ENCODE measurements at regions of chr10 and their contacts with region 1.

Region 1: GRCh38 chr10:17257466-17258321 is 29.7 kb downstream of the VIM start:
- DNase-seq: peak; percentile 57
- H3K4me3 Mint-ChIP-seq: no peak overlapping the region
- H3K27ac Mint-ChIP-seq: no peak overlapping the region
- H3K4me1 Mint-ChIP-seq: peaks cover 16% of the 10 kb centered on the region
- H3K27me3 Mint-ChIP-seq: no peaks in the 10 kb centered on the region

Region 2: DNA sequence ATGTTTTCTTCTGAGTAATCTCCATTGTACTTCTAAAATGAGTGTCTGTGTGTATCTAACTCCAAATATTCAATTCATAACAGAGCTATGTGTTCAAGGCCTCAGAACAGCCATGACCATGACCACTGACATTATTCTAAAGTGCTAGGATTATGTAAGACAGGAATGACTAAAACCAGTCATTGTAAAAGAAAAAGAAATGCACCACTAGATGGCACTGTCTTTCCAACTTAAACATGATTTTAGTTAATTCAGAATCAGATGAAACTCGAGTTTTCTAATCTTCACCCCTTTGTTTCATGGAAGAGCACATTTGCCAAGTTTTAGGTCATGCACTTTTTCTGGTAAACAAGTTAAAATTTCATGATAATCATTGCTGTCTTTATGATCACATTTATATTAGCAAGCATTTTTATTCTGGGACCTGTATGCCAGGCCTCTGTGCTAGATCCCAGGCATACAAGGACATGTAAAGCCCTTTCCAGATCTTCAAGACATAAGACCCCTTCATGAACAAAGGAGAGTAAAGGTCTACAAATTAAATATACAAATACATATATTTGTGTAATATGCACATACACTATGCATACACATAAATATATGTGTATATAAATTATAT is 414.3 kb before region 1 on chr10:
- CTCF ChIA-PET with region 1: interaction called, 26 read pairs
- POLR2A ChIA-PET with region 1: interaction called, 4 read pairs
- DNase-seq: no peak
- H3K4me3 Mint-ChIP-seq: no peak overlapping the region
- H3K27ac Mint-ChIP-seq: no peak overlapping the region
- H3K4me1 Mint-ChIP-seq: no peaks in the 10 kb centered on the region
- H3K27me3 Mint-ChIP-seq: peaks cover 6% of the 10 kb centered on the region

Region 3: DNA sequence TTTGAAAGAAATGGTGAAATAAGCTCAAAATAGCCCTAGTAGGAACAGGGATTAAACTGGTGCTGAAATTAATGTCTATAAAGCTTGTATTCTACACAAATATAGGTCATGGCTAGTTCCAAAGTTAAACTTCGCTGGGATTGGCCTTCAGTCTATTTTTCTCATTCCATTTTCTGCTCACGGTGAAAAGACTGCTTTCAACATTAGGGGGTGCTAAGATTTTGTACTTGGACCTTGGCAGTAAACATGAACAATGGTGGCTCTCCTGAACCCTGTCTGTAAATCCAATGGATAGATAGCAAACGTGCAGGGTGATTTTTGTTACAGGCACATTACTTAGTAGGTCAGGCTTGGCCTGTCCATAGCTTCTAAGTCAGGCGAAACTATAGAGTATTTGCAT is 404.5 kb before region 1 on chr10:
- CTCF ChIA-PET with region 1: interaction called, 12 read pairs
- POLR2A ChIA-PET with region 1: no interaction called
- DNase-seq: no peak
- H3K4me3 Mint-ChIP-seq: no peak overlapping the region
- H3K27ac Mint-ChIP-seq: no peak overlapping the region
- H3K4me1 Mint-ChIP-seq: no peaks in the 10 kb centered on the region
- H3K27me3 Mint-ChIP-seq: peaks cover 4% of the 10 kb centered on the region

Measured in activated CD4-positive, alpha-beta memory T cell treated with anti-CD3 and anti-CD28 coated beads, Interleukin-2, amount 10 ng/mL, durations not matched to agents 7 days and 5 days (primary cell).